ENCODE measurements at regions of chr3 and their contacts with region 1.

Region 1: DNA sequence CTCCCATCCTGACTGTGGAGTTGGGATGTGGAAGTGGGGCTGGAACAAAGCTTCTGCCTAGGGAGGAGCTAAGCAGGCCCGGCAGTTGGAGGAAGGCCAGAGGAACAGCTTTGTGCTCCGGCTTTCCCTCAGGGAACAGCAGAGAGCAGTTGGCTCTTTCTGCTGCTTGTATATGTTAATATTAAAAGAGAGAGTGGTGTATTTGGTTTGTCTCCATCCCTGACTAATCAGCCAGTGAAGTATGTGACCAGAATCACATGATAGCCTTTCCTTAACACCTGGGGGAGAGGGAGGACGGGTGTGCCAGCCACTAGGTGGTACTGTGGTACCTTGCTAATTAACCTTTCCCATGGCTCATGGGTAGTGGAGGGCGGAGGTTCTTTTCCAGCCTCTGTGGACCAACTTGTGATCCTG is 10.0 kb downstream of the EIF2B5 start:
- DNase-seq: no peak
- ATAC-seq: peak; percentile 92
- H3K4me3 ChIP-seq: no peak overlapping the region
- H3K27ac ChIP-seq: peak overlapping the region; percentile 11; the same call in 1 of the 2 replicates
- H3K4me1 ChIP-seq: peaks cover 0 to 17% of the 10 kb centered on the region in 2 experiments; a peak in 1 of 4 replicates
- H3K27me3 ChIP-seq: no peaks in the 10 kb centered on the region
- CTCF ChIP-seq: peak; percentile 70 to 78 (median 76)
- POLR2A ChIP-seq: no peak
- RAD21 ChIP-seq: peak; percentile 89

Region 2: GRCh38 chr3:184250167-184250828 is 105.2 kb after region 1 on chr3:
- CTCF ChIA-PET with region 1: interaction called, 7 read pairs
- POLR2A ChIA-PET with region 1: no interaction called
- RAD21 ChIA-PET with region 1: no interaction called
- intact Hi-C with region 1: loop called (anchors 2 kb)
- DNase-seq: peak; percentile 91
- ATAC-seq: peak; percentile 76
- H3K4me3 ChIP-seq: peak overlapping the region; percentile 89 to 100
- H3K27ac ChIP-seq: peak overlapping the region; percentile 82
- H3K4me1 ChIP-seq: peaks cover 3 to 9% of the 10 kb centered on the region in 2 experiments; a peak in 2 of 4 replicates
- H3K27me3 ChIP-seq: no peaks in the 10 kb centered on the region
- CTCF ChIP-seq: peak in 2 of 3 experiments; percentile 96 to 98; a peak in 4 of 6 replicates
- POLR2A ChIP-seq: no peak
- RAD21 ChIP-seq: no peak